Activated CD4-positive, alpha-beta T cell treated with anti-CD3 and anti-CD28 coated beads, Interleukin-2, amount 10 ng/mL, durations not matched to agents 7 days and 5 days (primary cell): ENCODE measurements at regions of chr17 and their contacts with region 1.

Region 1: GRCh38 chr17:8016632-8017478 is 14.4 kb downstream of the GUCY2D start:
- DNase-seq: peak; percentile 68
- H3K4me3 Mint-ChIP-seq: peak overlapping the region; percentile 66
- H3K27ac Mint-ChIP-seq: no peak overlapping the region
- H3K4me1 Mint-ChIP-seq: peaks cover 11% of the 10 kb centered on the region
- H3K27me3 Mint-ChIP-seq: peaks cover 21% of the 10 kb centered on the region

Region 2: DNA sequence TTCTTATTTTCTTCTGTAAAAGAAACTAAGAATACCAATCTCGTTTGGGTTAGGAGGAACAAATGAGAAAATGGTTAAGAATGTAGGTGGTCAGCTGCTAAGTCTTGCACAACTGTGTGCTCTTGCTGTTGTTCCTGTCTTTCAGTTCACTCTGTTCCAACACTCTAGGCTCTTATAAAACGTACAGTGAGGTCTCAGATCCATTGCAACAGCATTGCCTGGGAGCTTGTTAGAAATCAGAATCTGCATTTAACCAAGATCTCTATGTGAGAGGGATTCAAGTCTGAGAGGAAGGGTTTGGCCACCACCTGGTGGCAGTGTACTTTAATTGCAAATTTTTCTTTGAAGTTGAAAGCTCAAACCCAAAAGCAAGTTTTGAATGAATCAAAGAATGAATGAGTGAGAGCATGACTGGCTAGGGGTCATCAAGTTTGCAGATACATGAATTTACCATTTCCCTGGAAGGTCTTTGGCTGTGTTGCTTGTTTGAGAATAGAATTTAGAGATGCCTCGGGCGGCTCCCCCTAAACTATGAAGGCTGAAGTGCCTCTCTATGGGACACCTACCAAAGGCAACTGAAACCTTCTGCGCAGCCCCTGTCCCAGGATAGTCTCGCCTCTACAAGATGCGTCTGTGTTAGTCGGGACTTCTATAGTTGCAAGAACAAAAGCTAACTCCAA is 24.5 kb after region 1 on chr17:
- CTCF ChIA-PET with region 1: interaction called, 12 read pairs
- POLR2A ChIA-PET with region 1: no interaction called
- DNase-seq: peak; percentile 60
- H3K4me3 Mint-ChIP-seq: no peak overlapping the region
- H3K27ac Mint-ChIP-seq: no peak overlapping the region
- H3K4me1 Mint-ChIP-seq: no peaks in the 10 kb centered on the region
- H3K27me3 Mint-ChIP-seq: peaks cover 31% of the 10 kb centered on the region